Heart right ventricle (tissue), 16 donors: ENCODE measurements at regions of chr14 and their contacts with region 1.

Region 1: GRCh38 chr14:51104467-51104866 is 9.6 kb upstream of the TRIM9 start:
- DNase-seq: no peak
- ATAC-seq: no peak
- H3K4me3 ChIP-seq: no peak overlapping the region
- H3K27ac ChIP-seq: no peak overlapping the region
- H3K4me1 ChIP-seq: no peaks in the 10 kb centered on the region
- H3K27me3 ChIP-seq: peaks cover 0 to 39% (median 14%) of the 10 kb centered on the region in 7 donors
- CTCF ChIP-seq: no peak

Region 2: GRCh38 chr14:51056421-51056820 is 48.0 kb before region 1 on chr14:
- intact Hi-C with region 1: no loop called
- DNase-seq: no peak
- ATAC-seq: no peak
- H3K4me3 ChIP-seq: no peak overlapping the region
- H3K27ac ChIP-seq: no peak overlapping the region
- H3K4me1 ChIP-seq: no peaks in the 10 kb centered on the region
- H3K27me3 ChIP-seq: no peaks in the 10 kb centered on the region
- CTCF ChIP-seq: no peak

Region 3: DNA sequence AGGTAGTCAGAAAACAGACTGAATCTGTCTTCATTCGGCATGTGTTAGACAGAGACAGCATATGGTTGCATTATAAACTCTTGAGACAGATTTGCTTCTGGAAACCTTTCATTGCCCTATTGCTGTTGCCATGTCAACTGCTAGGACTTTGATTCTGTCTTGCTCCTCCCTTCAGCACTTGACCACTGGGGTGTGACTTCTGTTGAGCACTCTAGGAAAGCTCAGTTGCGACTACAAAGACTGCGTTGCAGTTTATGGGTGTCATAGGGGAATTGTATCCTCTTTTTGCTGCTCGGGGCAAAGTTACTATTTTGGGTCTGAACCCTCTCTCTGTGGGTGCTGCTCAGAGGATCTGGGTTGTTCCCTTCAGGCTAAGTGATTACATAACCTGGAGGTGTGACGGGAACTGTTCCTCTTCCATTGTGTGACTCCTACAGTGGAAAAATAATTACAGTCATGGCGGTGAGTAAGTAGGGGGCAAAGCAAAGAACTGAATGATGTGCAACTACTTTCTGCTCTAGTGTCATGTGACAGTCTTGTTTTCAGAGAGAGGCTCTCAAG is 34.7 kb after region 1 on chr14:
- intact Hi-C with region 1: no loop called
- DNase-seq: no peak
- ATAC-seq: peak in 1 of 8 donors; percentile 20
- H3K4me3 ChIP-seq: no peak overlapping the region
- H3K27ac ChIP-seq: no peak overlapping the region
- H3K4me1 ChIP-seq: no peaks in the 10 kb centered on the region
- H3K27me3 ChIP-seq: no peaks in the 10 kb centered on the region
- CTCF ChIP-seq: no peak

Region 4: GRCh38 chr14:51219473-51220448 is 115.3 kb after region 1 on chr14:
- intact Hi-C with region 1: loop called in 1 of 10 experiments (anchors 10 kb)
- DNase-seq: no peak
- ATAC-seq: no peak
- H3K4me3 ChIP-seq: no peak overlapping the region
- H3K27ac ChIP-seq: no peak overlapping the region
- H3K4me1 ChIP-seq: no peaks in the 10 kb centered on the region
- H3K27me3 ChIP-seq: no peaks in the 10 kb centered on the region
- CTCF ChIP-seq: peak; percentile 11 to 71 (median 62)